ENCODE measurements at regions of chr13 and their contacts with region 1.

Region 1: DNA sequence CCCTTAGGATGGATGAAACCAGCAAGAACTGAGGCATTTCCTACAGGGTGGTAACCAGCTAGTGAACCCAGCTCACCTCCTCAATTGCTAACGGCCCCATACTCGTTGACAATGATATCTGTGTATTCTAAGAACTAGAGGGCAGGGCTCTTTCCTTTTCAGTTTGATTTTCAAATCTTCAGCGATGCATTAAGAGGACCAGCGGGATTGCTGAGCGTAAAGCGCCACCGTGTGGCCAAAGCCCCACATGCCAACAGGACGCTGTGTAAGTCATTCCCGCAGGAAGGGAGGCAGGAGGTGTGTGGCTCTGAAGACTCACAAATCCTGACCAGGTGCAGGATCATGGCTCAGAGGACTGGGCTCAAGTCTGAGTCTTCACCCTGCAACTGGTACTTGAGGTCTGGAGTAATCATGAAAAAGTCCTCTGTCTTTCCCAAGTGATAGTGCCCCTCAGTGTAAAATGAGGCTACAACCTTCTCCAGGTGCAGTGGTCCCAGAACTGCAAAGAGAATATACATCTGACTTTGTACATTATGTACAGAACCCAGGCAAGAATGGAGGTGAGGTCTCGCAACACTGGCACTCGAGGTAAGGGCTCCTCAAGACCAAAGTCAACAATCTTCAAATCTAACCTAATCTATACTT is 40.9 kb downstream of the C13orf42 start:
- DNase-seq: peak; percentile 78 to 86
- H3K4me3 ChIP-seq: no peak overlapping the region
- H3K4me3 Mint-ChIP-seq: no peak overlapping the region
- H3K27ac Mint-ChIP-seq: no peak overlapping the region
- H3K4me1 ChIP-seq: no peaks in the 10 kb centered on the region
- H3K4me1 Mint-ChIP-seq: no peaks in the 10 kb centered on the region
- H3K27me3 ChIP-seq: no peaks in the 10 kb centered on the region
- H3K27me3 Mint-ChIP-seq: no peaks in the 10 kb centered on the region
- CTCF ChIP-seq: peak; percentile 93 to 95

Region 2: DNA sequence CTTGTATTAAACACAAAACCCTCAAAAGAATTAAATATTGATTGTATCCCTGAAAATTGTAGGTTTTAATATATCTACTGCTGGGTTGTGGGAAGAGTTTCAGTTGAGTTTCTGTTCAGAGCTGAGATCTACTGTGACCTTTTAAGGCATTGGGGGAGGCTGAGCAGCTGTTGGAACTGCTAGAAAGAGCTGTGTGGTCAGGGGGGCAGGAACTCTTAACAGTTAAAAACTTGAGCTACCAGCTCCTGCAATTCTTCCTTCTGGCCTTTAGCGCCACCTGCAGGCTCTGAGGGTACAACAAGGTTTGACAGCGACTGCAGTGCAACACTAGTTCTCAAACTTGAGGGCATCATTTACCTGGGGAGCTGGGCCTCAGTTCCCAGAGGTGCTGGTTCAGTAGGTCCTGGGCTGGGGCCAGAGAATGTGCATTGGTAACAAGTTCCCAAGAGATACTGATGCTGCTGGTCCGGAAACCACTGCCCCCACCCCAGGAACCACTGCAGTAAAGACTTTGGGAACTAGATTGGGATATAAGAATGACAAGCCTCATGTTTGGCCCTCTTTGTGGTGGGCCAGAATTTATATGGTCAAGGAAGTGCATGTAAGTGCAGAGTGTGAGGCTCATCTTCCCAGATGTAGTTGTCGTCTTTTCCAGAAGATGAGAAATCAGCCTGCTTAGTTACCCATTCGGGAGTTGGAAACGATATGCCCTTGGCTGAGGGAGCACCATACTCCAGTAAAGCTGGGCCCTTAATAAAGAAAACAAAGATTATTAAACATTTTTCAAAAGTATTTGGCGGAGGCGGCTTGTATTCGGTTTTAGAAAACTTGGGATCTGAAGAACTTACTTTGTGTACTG is 158.0 kb before region 1 on chr13:
- CTCF ChIA-PET with region 1: interaction called, 5 read pairs
- POLR2A ChIA-PET with region 1: no interaction called
- intact Hi-C with region 1: loop called (anchors 1 kb)
- DNase-seq: peak; percentile 87 to 89
- H3K4me3 ChIP-seq: no peak overlapping the region
- H3K4me3 Mint-ChIP-seq: peak overlapping the region; percentile 55
- H3K27ac Mint-ChIP-seq: peak overlapping the region; percentile 55
- H3K4me1 ChIP-seq: peaks cover 13% of the 10 kb centered on the region
- H3K4me1 Mint-ChIP-seq: peaks cover 25% of the 10 kb centered on the region
- H3K27me3 ChIP-seq: no peaks in the 10 kb centered on the region
- H3K27me3 Mint-ChIP-seq: no peaks in the 10 kb centered on the region
- CTCF ChIP-seq: peak; percentile 88 to 92

Region 3: DNA sequence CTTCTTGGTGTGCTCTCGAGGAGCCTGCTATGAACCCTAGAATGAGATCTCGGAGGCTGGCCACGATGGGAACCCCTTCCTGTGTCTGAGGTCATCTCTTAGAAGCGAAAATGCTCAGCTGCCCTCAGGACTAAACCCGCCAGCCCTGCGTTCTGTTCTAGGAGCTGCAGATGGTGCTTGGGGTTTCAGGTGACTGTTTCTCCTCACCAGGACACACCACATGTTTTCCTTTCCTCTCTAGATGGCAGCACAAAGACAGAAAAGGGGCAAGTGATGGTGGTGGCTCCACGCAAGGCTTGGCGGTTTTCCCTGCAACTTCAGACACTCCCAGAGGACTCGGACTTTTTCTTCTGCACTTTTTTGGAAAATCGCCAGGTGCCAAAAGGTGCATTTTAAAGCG is 100.4 kb before region 1 on chr13:
- CTCF ChIA-PET with region 1: interaction called, 4 read pairs
- POLR2A ChIA-PET with region 1: no interaction called
- intact Hi-C with region 1: loop called (anchors 1 kb)
- DNase-seq: peak; percentile 49 to 57
- H3K4me3 ChIP-seq: no peak overlapping the region
- H3K4me3 Mint-ChIP-seq: no peak overlapping the region
- H3K27ac Mint-ChIP-seq: no peak overlapping the region
- H3K4me1 ChIP-seq: no peaks in the 10 kb centered on the region
- H3K4me1 Mint-ChIP-seq: no peaks in the 10 kb centered on the region
- H3K27me3 ChIP-seq: no peaks in the 10 kb centered on the region
- H3K27me3 Mint-ChIP-seq: no peaks in the 10 kb centered on the region
- CTCF ChIP-seq: peak; percentile 20 to 55

Region 4: GRCh38 chr13:50991579-50992521 is 78.3 kb before region 1 on chr13:
- CTCF ChIA-PET with region 1: no interaction called
- POLR2A ChIA-PET with region 1: no interaction called
- intact Hi-C with region 1: loop called (anchors 1 kb)
- DNase-seq: no peak
- H3K4me3 ChIP-seq: no peak overlapping the region
- H3K4me3 Mint-ChIP-seq: no peak overlapping the region
- H3K27ac Mint-ChIP-seq: no peak overlapping the region
- H3K4me1 ChIP-seq: peaks cover 50% of the 10 kb centered on the region
- H3K4me1 Mint-ChIP-seq: no peaks in the 10 kb centered on the region
- H3K27me3 ChIP-seq: no peaks in the 10 kb centered on the region
- H3K27me3 Mint-ChIP-seq: no peaks in the 10 kb centered on the region
- CTCF ChIP-seq: no peak

Region 5: GRCh38 chr13:51044023-51044665 is 26.0 kb before region 1 on chr13:
- CTCF ChIA-PET with region 1: interaction called, 7 read pairs
- POLR2A ChIA-PET with region 1: no interaction called
- intact Hi-C with region 1: loop called (anchors 2 kb)
- DNase-seq: peak in 1 of 2 experiments; percentile 42
- H3K4me3 ChIP-seq: no peak overlapping the region
- H3K4me3 Mint-ChIP-seq: no peak overlapping the region
- H3K27ac Mint-ChIP-seq: no peak overlapping the region
- H3K4me1 ChIP-seq: no peaks in the 10 kb centered on the region
- H3K4me1 Mint-ChIP-seq: no peaks in the 10 kb centered on the region
- H3K27me3 ChIP-seq: no peaks in the 10 kb centered on the region
- H3K27me3 Mint-ChIP-seq: no peaks in the 10 kb centered on the region
- CTCF ChIP-seq: peak in 1 of 2 experiments; percentile 72

Region 6: DNA sequence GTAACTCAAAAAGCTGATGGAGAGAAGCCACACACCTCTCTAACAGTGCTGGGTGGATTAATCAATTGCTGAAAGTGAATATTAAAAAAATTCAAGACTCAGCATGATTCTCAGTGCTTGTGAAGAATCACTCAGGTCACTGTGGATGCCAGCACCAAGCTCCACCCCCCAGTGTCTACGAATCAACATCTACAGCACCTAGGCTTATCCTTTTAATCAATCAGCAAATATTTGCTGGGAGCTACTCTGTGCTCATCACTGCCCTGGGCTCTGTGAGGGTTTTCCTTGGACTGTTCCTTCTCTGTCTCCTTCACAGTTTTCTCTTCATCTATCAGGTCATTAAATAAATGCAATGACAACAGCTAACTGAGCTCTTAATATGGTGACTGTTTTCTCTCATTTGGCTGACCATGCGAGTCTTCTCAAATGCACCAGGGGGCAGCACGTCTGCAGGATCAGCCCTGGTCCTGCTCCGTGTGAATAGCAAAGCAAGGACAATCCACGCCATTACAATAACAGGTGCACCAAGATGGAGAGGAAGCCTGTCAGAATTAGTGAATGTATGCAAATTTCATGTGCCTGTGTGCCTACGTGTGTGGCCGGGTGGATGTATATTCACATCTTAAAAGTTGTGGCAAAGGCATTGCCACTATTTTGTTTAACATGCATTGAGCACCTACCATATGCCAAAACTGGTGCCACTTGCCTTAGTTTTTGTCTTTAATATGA is 55.5 kb after region 1 on chr13:
- CTCF ChIA-PET with region 1: no interaction called
- POLR2A ChIA-PET with region 1: no interaction called
- intact Hi-C with region 1: loop called (anchors 5 kb)
- DNase-seq: peak; percentile 60 to 66
- H3K4me3 ChIP-seq: no peak overlapping the region
- H3K4me3 Mint-ChIP-seq: no peak overlapping the region
- H3K27ac Mint-ChIP-seq: no peak overlapping the region
- H3K4me1 ChIP-seq: peaks cover 36% of the 10 kb centered on the region
- H3K4me1 Mint-ChIP-seq: peaks cover 18% of the 10 kb centered on the region
- H3K27me3 ChIP-seq: no peaks in the 10 kb centered on the region
- H3K27me3 Mint-ChIP-seq: no peaks in the 10 kb centered on the region
- CTCF ChIP-seq: peak; percentile 67 to 75

Measured in Caco-2 (cell line).